H1 (cell line): ENCODE measurements at regions of chr19 and their contacts with region 1.

Region 1: DNA sequence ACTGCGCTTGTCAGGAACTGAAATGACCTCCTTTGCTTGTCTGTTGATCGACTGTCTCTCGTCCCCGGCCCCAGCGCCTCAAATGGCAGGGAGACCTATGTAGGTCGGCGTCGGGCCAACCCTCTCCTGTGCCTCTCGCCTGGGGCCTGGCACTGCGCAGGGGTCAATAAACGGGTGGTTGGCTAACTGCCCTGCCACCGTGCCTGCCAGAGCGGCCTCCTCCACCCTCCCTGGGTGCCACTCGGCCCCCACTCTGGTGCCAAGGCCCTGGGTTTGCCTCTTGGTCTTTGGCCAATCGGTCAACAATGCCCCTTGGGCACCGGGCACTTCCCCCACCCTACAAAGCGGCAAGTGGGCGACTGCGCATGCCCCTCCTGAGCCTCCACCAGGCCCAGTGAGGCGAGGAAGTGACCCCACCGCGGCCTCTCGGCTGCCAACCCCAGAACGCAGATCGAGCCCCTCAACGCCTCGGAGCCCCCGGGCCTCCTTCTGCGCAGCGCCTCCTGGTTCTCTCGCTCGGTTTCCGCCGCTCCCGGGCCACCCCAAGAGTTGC is 1.1 kb downstream of the KEAP1 start:
- DNase-seq: peak in 1 of 2 experiments; percentile 71
- H3K4me3 ChIP-seq: peak overlapping the region; percentile 64 to 96 (median 86)
- H3K27ac ChIP-seq: peak overlapping the region; percentile 96
- H3K4me1 ChIP-seq: peaks cover 3 to 24% (median 13%) of the 10 kb centered on the region in 4 experiments
- H3K27me3 ChIP-seq: no peaks in the 10 kb centered on the region
- CTCF ChIP-seq: no peak
- EP300 ChIP-seq: no peak
- POLR2A ChIP-seq: no peak; a peak in 1 of 3 replicates
- RAD21 ChIP-seq: no peak

Region 2: GRCh38 chr19:10486538-10486937 is 15.5 kb before region 1 on chr19:
- CTCF ChIA-PET with region 1: interaction called, 78 read pairs
- POLR2A ChIA-PET with region 1: interaction called, 8 read pairs
- DNase-seq: no peak
- H3K4me3 ChIP-seq: no peak overlapping the region
- H3K27ac ChIP-seq: no peak overlapping the region
- H3K4me1 ChIP-seq: no peaks in the 10 kb centered on the region
- H3K27me3 ChIP-seq: no peaks in the 10 kb centered on the region
- CTCF ChIP-seq: no peak
- EP300 ChIP-seq: no peak
- POLR2A ChIP-seq: no peak
- RAD21 ChIP-seq: no peak

Region 3: GRCh38 chr19:10491472-10492047 is 10.5 kb before region 1 on chr19:
- CTCF ChIA-PET with region 1: interaction called, 78 read pairs
- POLR2A ChIA-PET with region 1: interaction called, 8 read pairs
- DNase-seq: no peak
- H3K4me3 ChIP-seq: no peak overlapping the region
- H3K27ac ChIP-seq: no peak overlapping the region
- H3K4me1 ChIP-seq: no peaks in the 10 kb centered on the region
- H3K27me3 ChIP-seq: no peaks in the 10 kb centered on the region
- CTCF ChIP-seq: no peak
- EP300 ChIP-seq: no peak
- POLR2A ChIP-seq: no peak
- RAD21 ChIP-seq: no peak

Region 4: DNA sequence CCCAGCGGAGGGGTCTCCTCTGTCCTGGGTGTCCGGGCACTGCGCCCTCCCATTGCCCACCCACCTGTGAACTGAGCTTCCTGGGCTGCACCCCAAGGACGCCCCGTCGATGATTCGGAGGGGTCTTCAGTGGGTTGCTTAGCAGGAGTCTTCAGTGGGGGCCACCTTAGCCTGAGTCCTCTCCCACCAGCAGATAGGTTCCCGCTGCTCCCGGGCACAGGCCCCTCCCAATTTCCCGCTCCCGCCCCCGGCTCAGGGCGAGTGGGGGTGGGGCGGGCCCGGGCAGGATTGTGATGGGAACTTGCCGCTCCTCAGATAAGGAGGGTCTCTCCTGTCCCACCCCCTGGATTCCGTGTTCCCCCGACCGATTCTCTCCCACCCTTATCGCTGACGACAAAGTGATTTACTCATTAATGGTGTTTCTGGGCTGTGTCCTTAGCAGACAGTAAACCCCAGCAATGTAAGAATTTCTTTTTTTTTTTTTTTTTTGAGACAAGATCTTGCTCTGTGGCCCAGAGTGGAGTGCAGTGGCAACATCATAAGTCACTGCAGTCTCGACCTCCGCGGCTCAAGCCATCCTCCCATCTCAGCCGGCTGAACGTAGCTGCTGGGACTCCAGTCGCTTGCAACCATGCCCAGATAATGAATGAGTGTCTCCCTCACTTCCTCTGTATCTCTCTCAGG is 15.9 kb after region 1 on chr19:
- CTCF ChIA-PET with region 1: interaction called, 46 read pairs
- POLR2A ChIA-PET with region 1: interaction called, 9 read pairs
- DNase-seq: peak in 1 of 2 experiments; percentile 87
- H3K4me3 ChIP-seq: peak overlapping the region; percentile 67 to 79 (median 78)
- H3K27ac ChIP-seq: no peak overlapping the region
- H3K4me1 ChIP-seq: peaks cover 0 to 29% (median 10%) of the 10 kb centered on the region in 4 experiments; a peak in 5 of 7 replicates
- H3K27me3 ChIP-seq: peaks cover 43 to 66% (median 62%) of the 10 kb centered on the region in 4 experiments; a peak in 6 of 7 replicates
- CTCF ChIP-seq: no peak
- EP300 ChIP-seq: no peak
- POLR2A ChIP-seq: no peak
- RAD21 ChIP-seq: no peak

Region 5: DNA sequence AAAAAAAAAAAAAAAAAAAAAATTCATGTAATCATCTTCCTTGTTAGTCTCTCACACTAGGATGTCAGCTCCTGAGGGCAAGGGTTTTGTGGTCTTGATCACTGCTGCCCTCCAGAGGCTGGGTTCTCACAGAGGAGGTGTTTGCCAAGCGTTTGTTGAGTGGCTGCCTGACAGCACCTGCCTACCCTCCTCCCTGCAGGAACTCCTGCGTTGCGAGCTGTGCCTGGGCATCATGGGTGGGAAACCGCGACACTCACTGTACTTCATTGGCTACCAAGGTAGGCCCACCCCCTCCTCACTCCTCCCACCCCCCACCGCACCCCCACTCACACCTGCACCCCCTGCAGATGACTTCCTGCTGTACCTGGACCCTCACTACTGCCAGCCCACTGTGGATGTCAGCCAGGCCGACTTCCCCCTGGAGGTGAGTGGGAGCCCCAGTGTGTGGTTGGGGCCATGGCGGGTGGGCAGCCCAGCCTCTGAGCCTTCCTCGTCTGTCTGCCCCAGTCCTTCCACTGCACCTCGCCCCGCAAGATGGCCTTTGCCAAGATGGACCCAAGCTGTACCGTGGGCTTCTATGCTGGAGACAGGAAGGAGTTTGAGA is 49.8 kb after region 1 on chr19:
- CTCF ChIA-PET with region 1: interaction called, 4 read pairs
- POLR2A ChIA-PET with region 1: interaction called, 14 read pairs
- DNase-seq: no peak
- H3K4me3 ChIP-seq: no peak overlapping the region
- H3K27ac ChIP-seq: no peak overlapping the region
- H3K4me1 ChIP-seq: no peaks in the 10 kb centered on the region
- H3K27me3 ChIP-seq: no peaks in the 10 kb centered on the region
- CTCF ChIP-seq: peak; percentile 45 to 58 (median 51)
- EP300 ChIP-seq: no peak
- POLR2A ChIP-seq: no peak
- RAD21 ChIP-seq: peak; percentile 52 to 64